MCF 10A (cell line): ENCODE measurements at regions of chr19 and their contacts with region 1.

Region 1: GRCh38 chr19:39412100-39412866 is at the start of gene PLEKHG2:
- DNase-seq: peak; percentile 100
- H3K4me3 Mint-ChIP-seq: peak within 1 kb of the TSS; percentile 94
- H3K27ac Mint-ChIP-seq: peak within 1 kb of the TSS; percentile 92
- H3K4me1 Mint-ChIP-seq: peaks cover 26% of the 10 kb centered on the region
- H3K27me3 Mint-ChIP-seq: no peaks in the 10 kb centered on the region
- CTCF ChIP-seq: peak; percentile 94
- total RNA-seq, gene PLEKHG2: 19.2 and 19.6 TPM in 2 replicates

Region 2: GRCh38 chr19:39125554-39126311 is 286.6 kb before region 1 on chr19 and contains the start of gene PAK4:
- CTCF ChIA-PET with region 1: no interaction called
- POLR2A ChIA-PET with region 1: interaction called, 3 read pairs
- intact Hi-C with region 1: loop called (anchors 1 kb)
- DNase-seq: peak; percentile 99
- H3K4me3 Mint-ChIP-seq: peak within 1 kb of the TSS; percentile 87
- H3K27ac Mint-ChIP-seq: peak within 1 kb of the TSS; percentile 89
- H3K4me1 Mint-ChIP-seq: peaks cover 24% of the 10 kb centered on the region
- H3K27me3 Mint-ChIP-seq: no peaks in the 10 kb centered on the region
- CTCF ChIP-seq: no peak
- total RNA-seq, gene PAK4: 28.4 and 29.5 TPM in 2 replicates

Region 3: GRCh38 chr19:39264306-39265290 is 147.7 kb before region 1 on chr19:
- CTCF ChIA-PET with region 1: no interaction called
- POLR2A ChIA-PET with region 1: no interaction called
- intact Hi-C with region 1: no loop called
- DNase-seq: no peak
- H3K4me3 Mint-ChIP-seq: no peak overlapping the region
- H3K27ac Mint-ChIP-seq: no peak overlapping the region
- H3K4me1 Mint-ChIP-seq: no peaks in the 10 kb centered on the region
- H3K27me3 Mint-ChIP-seq: peaks cover 47% of the 10 kb centered on the region
- CTCF ChIP-seq: no peak

Region 4: DNA sequence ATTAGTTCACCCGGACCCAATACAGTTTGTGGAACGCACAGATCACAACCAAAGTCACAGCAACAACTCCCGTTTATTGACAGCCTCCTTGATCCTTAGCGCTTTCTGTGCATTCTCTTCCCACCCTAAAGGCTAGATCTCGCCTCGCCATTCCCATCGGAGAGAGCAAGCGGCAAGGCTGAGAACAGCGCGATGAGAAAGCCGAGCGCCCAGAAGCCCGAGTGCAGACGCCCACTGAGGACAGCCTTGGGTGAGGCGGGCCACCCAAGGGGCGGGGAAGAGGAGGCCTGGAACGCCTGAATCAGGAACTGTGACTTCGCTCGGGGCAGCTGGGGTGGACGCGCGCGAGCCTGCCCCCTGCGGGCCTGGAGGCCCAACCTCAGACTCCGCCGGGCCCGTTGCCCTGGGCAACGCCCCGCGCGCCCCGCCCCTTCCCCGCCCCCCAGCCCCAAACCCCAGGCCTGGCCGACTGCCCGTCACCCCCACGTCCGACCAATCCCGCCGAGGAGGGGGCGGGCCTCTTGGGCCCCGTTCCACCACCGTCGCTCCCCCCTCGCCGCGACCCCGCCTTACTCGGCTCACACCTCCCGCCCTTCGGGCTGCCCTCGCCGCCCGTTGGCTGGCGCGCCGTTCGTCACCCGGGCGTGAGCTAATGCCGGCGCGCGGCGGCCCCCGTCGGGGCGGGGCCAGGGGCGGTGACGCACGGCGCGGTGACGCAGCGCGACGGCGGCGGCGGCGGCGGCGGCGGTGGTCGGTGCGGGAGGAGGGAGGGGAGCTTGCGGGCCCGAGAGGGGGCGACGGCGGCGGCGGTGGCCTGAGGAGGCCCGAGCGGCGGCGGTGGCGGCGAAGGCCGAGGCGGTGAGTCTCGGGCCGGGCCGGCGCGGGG is 70.3 kb before region 1 on chr19 and contains the start of gene SAMD4B:
- CTCF ChIA-PET with region 1: no interaction called
- POLR2A ChIA-PET with region 1: interaction called, 5 read pairs
- intact Hi-C with region 1: loop called (anchors 1 kb)
- DNase-seq: peak; percentile 98
- H3K4me3 Mint-ChIP-seq: peak within 1 kb of the TSS; percentile 100
- H3K27ac Mint-ChIP-seq: peak within 1 kb of the TSS; percentile 97
- H3K4me1 Mint-ChIP-seq: peaks cover 48% of the 10 kb centered on the region
- H3K27me3 Mint-ChIP-seq: no peaks in the 10 kb centered on the region
- CTCF ChIP-seq: peak; percentile 79
- total RNA-seq, gene SAMD4B: 65.4 and 94.2 TPM in 2 replicates

Region 5: GRCh38 chr19:39390755-39391592 is 21.3 kb before region 1 on chr19 and contains the starts of genes MED29 and PAF1:
- CTCF ChIA-PET with region 1: interaction called, 80 read pairs
- POLR2A ChIA-PET with region 1: interaction called, 121 read pairs
- intact Hi-C with region 1: no loop called
- DNase-seq: peak; percentile 100
- H3K4me3 Mint-ChIP-seq: peak within 1 kb of the TSS; percentile 93
- H3K27ac Mint-ChIP-seq: peak within 1 kb of the TSS; percentile 98
- H3K4me1 Mint-ChIP-seq: peaks cover 12% of the 10 kb centered on the region
- H3K27me3 Mint-ChIP-seq: no peaks in the 10 kb centered on the region
- CTCF ChIP-seq: no peak
- total RNA-seq, gene MED29: 24.3 and 31.7 TPM in 2 replicates
- total RNA-seq, gene PAF1: 47.0 and 48.5 TPM in 2 replicates

Region 6: DNA sequence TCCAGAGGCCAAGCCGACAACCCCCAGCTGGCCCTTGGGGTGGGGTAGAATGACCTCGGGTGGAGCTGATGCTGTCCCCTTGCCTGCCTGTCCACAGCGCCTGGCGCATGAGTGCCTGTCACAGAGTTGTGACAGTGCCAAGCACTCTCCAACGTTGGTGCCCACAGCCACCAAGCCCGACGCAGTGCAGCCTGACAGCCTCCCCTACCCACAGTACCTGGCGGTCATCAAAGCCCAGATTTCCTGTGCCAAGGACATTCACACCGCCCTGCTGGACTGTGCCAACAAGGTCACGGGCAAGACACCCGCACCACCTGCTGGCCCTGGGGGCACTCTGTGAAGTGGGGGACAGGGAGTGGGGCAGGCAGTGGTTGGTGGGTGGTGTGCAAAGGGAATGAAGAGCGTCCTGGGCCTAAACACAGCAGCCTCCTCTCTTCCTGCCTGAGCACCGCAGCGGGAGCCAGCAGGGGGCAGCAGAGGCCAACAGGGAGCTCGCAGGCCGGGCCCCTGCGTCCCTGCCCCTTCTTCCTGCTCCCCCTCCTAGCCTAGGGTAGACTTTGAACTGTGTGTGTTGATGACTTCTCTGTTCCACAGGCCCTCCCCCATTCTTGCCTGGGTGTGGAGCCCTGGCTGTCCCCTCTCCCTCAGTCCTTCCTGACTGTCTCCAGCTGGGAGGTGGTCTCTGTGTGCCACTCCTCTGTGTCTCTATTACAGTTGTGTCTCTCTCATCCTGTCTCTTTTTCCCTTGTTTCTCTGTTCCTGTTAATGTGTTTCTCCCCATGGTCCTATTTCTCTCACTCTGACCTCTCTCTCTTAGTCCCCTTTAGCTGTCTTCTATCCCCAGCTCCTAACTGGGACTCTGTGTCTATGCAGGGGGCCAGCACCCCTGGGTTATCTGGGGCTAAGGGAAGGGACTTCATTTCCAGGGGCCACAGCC is 14.7 kb before region 1 on chr19:
- CTCF ChIA-PET with region 1: interaction called, 80 read pairs
- POLR2A ChIA-PET with region 1: interaction called, 121 read pairs
- intact Hi-C with region 1: loop called (anchors 1 kb)
- DNase-seq: peak; percentile 92
- H3K4me3 Mint-ChIP-seq: peak overlapping the region; percentile 10
- H3K27ac Mint-ChIP-seq: peak overlapping the region; percentile 92
- H3K4me1 Mint-ChIP-seq: peaks cover 40% of the 10 kb centered on the region
- H3K27me3 Mint-ChIP-seq: no peaks in the 10 kb centered on the region
- CTCF ChIP-seq: peak; percentile 98